ENCODE measurements at regions of chr10 and their contacts with region 1.

Region 1: DNA sequence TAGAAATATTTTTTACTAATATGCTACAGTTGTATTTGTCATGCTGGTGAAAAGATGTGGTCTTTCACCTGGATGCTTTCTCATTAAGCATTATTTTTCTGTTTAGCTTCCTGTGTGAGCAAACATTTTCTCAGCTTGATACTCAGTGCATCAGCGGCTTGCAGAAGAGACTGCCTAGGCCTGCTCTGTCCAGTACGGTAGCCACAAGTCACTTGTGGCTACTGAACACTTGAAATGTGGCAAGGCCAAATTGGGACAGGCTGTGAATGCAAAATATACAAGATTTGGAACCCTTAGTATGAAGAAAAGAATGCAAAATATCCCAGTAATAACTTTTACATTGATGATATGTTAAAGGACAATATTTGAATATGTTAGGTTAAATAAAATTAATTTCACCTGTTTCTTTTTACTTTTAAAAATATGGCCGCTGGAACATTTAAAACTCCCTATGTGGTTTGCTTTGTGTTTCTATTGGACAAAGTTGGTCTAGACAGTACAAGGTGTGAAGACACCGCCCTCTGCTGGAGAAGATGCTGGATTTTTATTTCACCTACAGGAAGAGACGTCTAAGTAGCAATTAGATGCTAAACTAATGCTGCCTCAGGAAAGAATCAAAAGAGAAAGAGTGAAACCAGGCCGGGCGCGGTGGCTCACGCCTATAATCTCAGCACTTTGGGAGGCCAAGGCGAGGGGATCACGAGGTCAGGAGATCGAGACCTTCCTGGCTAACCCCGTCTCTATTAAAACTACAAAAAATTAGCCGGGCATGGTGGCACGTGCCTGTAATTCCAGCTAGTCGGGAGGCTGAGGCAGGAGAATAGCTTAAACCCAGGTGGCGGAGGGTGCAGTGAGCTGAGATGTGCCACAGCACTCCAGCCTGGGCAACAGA is 5.3 kb downstream of the SRGN start:
- DNase-seq: peak; percentile 89
- ATAC-seq: peak; percentile 90
- H3K4me3 ChIP-seq: no peak overlapping the region
- H3K27ac ChIP-seq: no peak overlapping the region
- H3K4me1 ChIP-seq: peaks cover 6% of the 10 kb centered on the region
- H3K27me3 ChIP-seq: no peaks in the 10 kb centered on the region
- CTCF ChIP-seq: peak; percentile 87
- POLR2A ChIP-seq: no peak
- RAD21 ChIP-seq: peak; percentile 91

Region 2: DNA sequence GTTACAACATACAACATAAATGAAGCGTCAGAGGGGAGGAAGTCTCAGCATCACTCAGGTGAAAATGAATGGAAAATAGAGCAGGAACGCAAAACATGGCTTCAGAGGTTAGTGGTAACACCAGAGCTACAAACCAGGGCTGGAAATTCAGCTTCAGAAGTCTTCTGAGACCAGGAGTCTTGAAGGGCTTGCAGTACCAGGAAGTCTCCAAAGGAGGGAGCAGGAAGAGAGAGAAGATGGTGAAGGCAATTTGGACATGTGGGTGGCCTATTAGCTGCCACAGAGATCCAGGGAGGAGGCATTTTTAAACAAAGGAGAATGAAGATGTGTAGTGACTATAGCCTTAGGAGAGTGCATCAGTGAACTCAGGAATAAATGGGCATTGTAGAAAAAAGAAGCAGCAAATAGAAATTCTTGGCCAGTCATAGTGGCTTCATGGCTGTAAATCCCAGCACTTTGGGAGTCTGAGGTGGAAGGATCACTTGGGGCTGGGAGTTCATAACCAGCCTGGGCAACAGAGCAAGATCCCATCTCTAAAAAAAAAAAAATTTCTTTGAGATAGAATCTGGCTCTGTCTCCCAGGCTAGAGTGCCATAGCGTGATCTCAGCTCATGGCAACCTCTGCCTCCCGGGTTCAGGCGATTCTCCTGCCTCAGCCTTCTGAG is 542.3 kb before region 1 on chr10:
- CTCF ChIA-PET with region 1: no interaction called
- POLR2A ChIA-PET with region 1: no interaction called
- dilution Hi-C with region 1: no loop called
- in situ Hi-C with region 1: no loop called
- intact Hi-C with region 1: no loop called
- DNase-seq: peak; percentile 82
- ATAC-seq: peak; percentile 96
- H3K4me3 ChIP-seq: no peak overlapping the region
- H3K27ac ChIP-seq: no peak overlapping the region
- H3K4me1 ChIP-seq: peaks cover 8% of the 10 kb centered on the region
- H3K27me3 ChIP-seq: no peaks in the 10 kb centered on the region
- CTCF ChIP-seq: peak; percentile 73
- POLR2A ChIP-seq: no peak
- RAD21 ChIP-seq: peak; percentile 74

Region 3: DNA sequence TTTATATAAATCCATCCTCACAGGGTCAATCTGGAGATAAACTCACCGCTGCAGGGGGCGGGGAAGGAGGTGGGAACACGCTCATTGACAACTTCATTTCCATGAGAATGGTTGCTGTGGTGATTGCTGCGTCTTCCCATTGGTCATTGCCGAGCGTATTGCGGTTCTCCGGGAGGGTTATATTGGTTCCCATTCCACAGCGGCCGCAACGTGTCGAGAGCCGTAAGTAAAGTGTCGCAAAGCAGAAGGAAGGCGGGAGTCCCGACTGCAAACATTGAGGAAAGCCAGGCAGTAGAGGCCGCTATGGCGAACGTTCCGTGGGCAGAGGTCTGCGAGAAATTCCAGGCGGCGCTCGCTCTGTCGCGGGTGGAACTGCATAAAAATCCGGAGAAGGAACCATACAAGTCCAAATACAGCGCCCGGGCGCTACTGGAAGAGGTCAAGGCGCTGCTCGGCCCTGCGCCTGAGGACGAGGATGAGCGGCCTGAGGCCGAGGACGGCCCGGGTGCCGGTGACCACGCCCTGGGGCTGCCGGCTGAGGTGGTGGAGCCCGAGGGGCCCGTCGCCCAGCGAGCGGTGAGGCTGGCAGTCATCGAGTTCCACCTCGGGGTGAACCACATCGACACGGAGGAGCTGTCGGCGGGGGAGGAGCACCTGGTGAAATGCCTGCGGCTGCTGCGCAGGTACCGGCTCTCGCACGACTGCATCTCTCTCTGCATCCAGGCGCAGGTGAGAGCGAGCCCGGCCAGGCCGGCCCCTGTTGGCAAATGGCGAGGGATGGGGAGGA is 104.5 kb before region 1 on chr10 and contains the start of gene KIFBP:
- CTCF ChIA-PET with region 1: no interaction called
- POLR2A ChIA-PET with region 1: no interaction called
- dilution Hi-C with region 1: no loop called
- in situ Hi-C with region 1: no loop called
- intact Hi-C with region 1: loop called (anchors 5 kb)
- DNase-seq: peak; percentile 98
- ATAC-seq: peak; percentile 91
- H3K4me3 ChIP-seq: peak within 1 kb of the TSS; percentile 85
- H3K27ac ChIP-seq: peak within 1 kb of the TSS; percentile 71
- H3K4me1 ChIP-seq: peaks cover 10% of the 10 kb centered on the region
- H3K27me3 ChIP-seq: no peaks in the 10 kb centered on the region
- CTCF ChIP-seq: peak; percentile 63
- POLR2A ChIP-seq: peak; percentile 88
- RAD21 ChIP-seq: peak; percentile 45
- total RNA-seq, gene KIFBP: 51.3 and 67.2 TPM in 2 replicates

Region 4: GRCh38 chr10:69392481-69393000 is 299.3 kb after region 1 on chr10:
- CTCF ChIA-PET with region 1: no interaction called
- POLR2A ChIA-PET with region 1: no interaction called
- dilution Hi-C with region 1: no loop called
- in situ Hi-C with region 1: no loop called
- intact Hi-C with region 1: loop called (anchors 5 kb)
- DNase-seq: peak; percentile 77
- ATAC-seq: peak; percentile 98
- H3K4me3 ChIP-seq: no peak overlapping the region
- H3K27ac ChIP-seq: no peak overlapping the region
- H3K4me1 ChIP-seq: no peaks in the 10 kb centered on the region; the same call in 1 of the 2 replicates
- H3K27me3 ChIP-seq: no peaks in the 10 kb centered on the region
- CTCF ChIP-seq: peak; percentile 95
- POLR2A ChIP-seq: 0 out of 2 replicates have a peak, but pooled peaks have one; percentile 24
- RAD21 ChIP-seq: peak; percentile 99